ENCODE measurements at regions of chr21 and their contacts with region 1.

Region 1: DNA sequence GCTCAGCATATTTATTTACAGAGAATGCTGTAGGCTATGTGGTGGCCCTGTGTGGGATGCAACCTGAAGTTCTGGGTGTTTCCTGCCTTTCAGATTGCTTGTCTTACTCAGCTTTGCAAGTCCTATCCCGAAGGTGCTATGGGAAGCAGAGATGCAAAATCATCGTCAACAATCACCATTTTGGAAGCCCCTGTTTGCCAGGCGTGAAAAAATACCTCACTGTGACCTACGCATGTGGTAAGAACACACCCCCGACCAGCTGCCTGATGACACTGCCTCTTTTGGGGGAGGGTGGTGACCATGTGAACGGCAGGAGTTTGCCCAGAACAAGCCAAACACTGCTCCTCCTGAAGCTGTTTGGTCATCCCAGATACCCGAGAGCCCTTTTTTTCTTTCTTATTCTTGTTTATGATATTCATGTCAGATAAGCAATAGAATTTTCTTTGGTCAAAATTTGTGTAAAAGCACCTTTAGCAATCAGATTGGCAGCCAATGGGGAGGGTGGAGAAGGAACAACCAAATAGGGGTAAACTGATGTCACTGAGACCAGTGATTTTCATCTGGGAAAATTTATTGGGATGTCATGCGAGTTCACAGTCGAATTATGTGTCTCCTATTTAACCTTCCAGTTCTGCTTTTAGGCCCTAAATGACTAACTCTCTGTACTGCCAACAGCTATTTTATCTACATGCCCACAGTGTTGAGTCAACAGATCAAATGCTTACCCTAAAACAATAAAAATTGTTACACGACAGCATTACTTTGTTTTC is 82.6 kb downstream of the EVA1C start:
- DNase-seq: no peak
- H3K4me3 Mint-ChIP-seq: no peak overlapping the region
- H3K27ac Mint-ChIP-seq: no peak overlapping the region
- H3K4me1 Mint-ChIP-seq: peaks cover 16% of the 10 kb centered on the region
- H3K27me3 Mint-ChIP-seq: no peaks in the 10 kb centered on the region

Region 2: DNA sequence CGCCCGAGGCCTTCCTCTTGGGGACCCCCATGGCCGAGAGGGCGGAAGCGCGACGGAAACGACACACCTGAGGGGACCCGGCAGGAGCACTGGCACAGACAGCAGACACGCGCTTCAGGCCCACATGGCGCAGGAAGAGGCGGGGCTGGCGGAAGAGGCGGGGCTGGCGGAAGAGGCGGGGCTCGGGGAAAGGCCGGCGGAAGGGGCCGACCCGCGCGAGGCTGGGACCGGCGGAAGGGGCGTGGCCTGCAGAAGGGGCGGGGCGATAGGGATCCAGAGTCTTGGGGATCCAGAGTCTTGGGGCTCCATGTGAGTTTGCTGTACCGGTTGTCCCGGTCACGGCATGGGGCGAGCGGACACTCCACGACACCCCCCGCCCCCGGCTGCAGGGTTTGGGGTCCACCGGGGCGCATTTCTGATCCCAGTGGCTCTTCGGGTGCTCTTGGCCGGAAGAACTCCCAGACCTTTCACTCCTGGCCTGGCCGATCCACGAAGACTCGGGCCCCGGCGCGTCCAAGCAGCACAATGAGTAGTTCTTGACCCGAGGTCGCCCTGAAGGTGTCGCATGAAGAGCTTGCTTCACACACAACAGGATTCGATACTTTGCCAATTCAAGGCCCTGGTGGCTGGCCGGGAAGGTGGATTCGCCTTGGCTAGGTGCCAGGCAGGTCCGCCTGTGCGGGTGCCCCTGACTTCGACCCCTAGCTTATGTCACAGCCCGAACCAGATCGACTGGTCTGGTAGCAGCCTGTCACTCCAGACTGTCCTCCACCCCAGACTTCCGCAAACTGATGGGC is 102.0 kb before region 1 on chr21 and contains the start of gene URB1:
- intact Hi-C with region 1: loop called (anchors 1 kb)
- DNase-seq: peak; percentile 89
- H3K4me3 Mint-ChIP-seq: peak within 1 kb of the TSS; percentile 91
- H3K27ac Mint-ChIP-seq: peak within 1 kb of the TSS; percentile 88
- H3K4me1 Mint-ChIP-seq: peaks cover 48% of the 10 kb centered on the region
- H3K27me3 Mint-ChIP-seq: peaks cover 3% of the 10 kb centered on the region
- total RNA-seq, gene URB1: 42.1 and 42.8 TPM in 2 replicates

Region 3: GRCh38 chr21:32475164-32475812 is 19.8 kb before region 1 on chr21:
- intact Hi-C with region 1: loop called (anchors 1 kb)
- DNase-seq: no peak
- H3K4me3 Mint-ChIP-seq: no peak overlapping the region
- H3K27ac Mint-ChIP-seq: no peak overlapping the region
- H3K4me1 Mint-ChIP-seq: peaks cover 9% of the 10 kb centered on the region
- H3K27me3 Mint-ChIP-seq: no peaks in the 10 kb centered on the region

Region 4: GRCh38 chr21:32529679-32530078 is 34.6 kb after region 1 on chr21:
- intact Hi-C with region 1: no loop called
- DNase-seq: no peak
- H3K4me3 Mint-ChIP-seq: no peak overlapping the region
- H3K27ac Mint-ChIP-seq: no peak overlapping the region
- H3K4me1 Mint-ChIP-seq: no peaks in the 10 kb centered on the region
- H3K27me3 Mint-ChIP-seq: no peaks in the 10 kb centered on the region

Region 5: GRCh38 chr21:32612075-32612998 is 117.2 kb after region 1 on chr21 and contains the start of gene CFAP298:
- intact Hi-C with region 1: loop called (anchors 5 kb)
- DNase-seq: peak; percentile 84
- H3K4me3 Mint-ChIP-seq: peak within 1 kb of the TSS; percentile 96
- H3K27ac Mint-ChIP-seq: peak within 1 kb of the TSS; percentile 93
- H3K4me1 Mint-ChIP-seq: peaks cover 8% of the 10 kb centered on the region
- H3K27me3 Mint-ChIP-seq: peaks cover 4% of the 10 kb centered on the region
- total RNA-seq, gene CFAP298: 52.9 and 54.6 TPM in 2 replicates